Activated naive CD4-positive, alpha-beta T cell treated with anti-CD3 and anti-CD28 coated beads for 36 hours (primary cell): ENCODE measurements at regions of chr16 and their contacts with region 1.

Region 1: GRCh38 chr16:80804056-80804450 is 345 bp downstream of the CDYL2 start:
- DNase-seq: peak; percentile 63
- H3K4me3 Mint-ChIP-seq: peak overlapping the region; percentile 88
- H3K27ac Mint-ChIP-seq: peak overlapping the region; percentile 80
- H3K4me1 Mint-ChIP-seq: peaks cover 31% of the 10 kb centered on the region
- H3K27me3 Mint-ChIP-seq: peaks cover 4% of the 10 kb centered on the region

Region 2: DNA sequence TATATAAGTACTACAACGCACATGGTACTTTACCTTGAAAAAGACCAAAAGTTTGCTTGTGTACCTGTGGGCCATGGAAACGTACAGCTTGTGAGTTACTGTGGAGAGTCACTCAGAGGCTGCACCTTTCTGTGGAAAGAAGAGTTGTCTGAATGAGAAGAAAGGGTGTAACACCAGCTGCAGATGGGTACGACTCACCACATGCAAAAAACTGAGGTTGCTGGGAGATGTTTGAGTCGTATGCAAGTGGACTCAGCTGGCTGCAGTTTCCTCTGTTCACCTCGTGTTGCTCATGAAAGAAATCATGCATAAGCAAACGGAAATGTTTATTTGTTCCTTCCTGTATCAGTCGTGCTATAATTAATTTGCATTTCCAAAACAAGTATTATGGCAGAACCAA is 285.6 kb before region 1 on chr16:
- CTCF ChIA-PET with region 1: no interaction called
- intact Hi-C with region 1: loop called (anchors 1 kb)
- DNase-seq: peak; percentile 71
- H3K4me3 Mint-ChIP-seq: no peak overlapping the region
- H3K27ac Mint-ChIP-seq: no peak overlapping the region
- H3K4me1 Mint-ChIP-seq: peaks cover 21% of the 10 kb centered on the region
- H3K27me3 Mint-ChIP-seq: peaks cover 20% of the 10 kb centered on the region

Region 3: DNA sequence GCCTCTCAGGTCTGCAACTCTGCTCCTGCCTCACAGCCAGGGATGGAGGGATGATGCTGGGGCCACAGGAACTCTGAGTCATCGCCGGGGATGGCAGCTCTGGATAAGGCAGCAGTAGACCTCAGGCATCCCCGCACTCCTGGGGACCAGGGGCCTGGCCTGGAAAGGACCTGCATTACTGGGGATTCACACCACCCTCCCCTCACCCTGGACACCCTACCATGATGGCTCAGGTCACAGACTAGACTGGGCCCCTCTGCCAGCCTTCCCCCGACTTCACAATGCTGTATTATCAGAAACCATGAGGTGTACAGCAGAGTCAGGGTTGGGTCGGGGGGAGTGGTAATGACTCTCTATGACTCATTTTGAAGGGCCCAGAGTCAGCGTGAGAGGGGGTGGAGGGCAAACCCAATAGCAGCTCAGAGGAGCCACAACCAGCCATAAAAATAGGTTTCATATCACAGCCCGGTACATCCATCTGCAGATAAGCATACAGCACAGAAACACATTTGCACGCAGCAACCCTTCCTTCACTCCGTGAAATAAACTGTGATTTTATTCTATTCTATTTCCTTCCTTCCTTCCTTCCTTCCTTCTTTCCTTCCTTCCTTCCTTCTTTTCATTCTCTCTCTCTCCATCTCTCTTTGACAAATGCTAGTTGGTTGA is 234.5 kb before region 1 on chr16:
- CTCF ChIA-PET with region 1: interaction called, 3 read pairs
- intact Hi-C with region 1: loop called (anchors 1 kb)
- DNase-seq: peak; percentile 91
- H3K4me3 Mint-ChIP-seq: no peak overlapping the region
- H3K27ac Mint-ChIP-seq: peak overlapping the region; percentile 43
- H3K4me1 Mint-ChIP-seq: peaks cover 30% of the 10 kb centered on the region
- H3K27me3 Mint-ChIP-seq: no peaks in the 10 kb centered on the region

Region 4: GRCh38 chr16:80671281-80671849 is 132.7 kb before region 1 on chr16:
- CTCF ChIA-PET with region 1: no interaction called
- intact Hi-C with region 1: loop called (anchors 5 kb)
- DNase-seq: no peak
- H3K4me3 Mint-ChIP-seq: no peak overlapping the region
- H3K27ac Mint-ChIP-seq: no peak overlapping the region
- H3K4me1 Mint-ChIP-seq: peaks cover 19% of the 10 kb centered on the region
- H3K27me3 Mint-ChIP-seq: no peaks in the 10 kb centered on the region

Region 5: GRCh38 chr16:80788027-80788426 is 16.0 kb before region 1 on chr16:
- CTCF ChIA-PET with region 1: no interaction called
- intact Hi-C with region 1: no loop called
- DNase-seq: no peak
- H3K4me3 Mint-ChIP-seq: no peak overlapping the region
- H3K27ac Mint-ChIP-seq: no peak overlapping the region
- H3K4me1 Mint-ChIP-seq: no peaks in the 10 kb centered on the region
- H3K27me3 Mint-ChIP-seq: no peaks in the 10 kb centered on the region

Region 6: GRCh38 chr16:80862160-80862705 is 58.2 kb after region 1 on chr16:
- CTCF ChIA-PET with region 1: no interaction called
- intact Hi-C with region 1: no loop called
- DNase-seq: no peak
- H3K4me3 Mint-ChIP-seq: no peak overlapping the region
- H3K27ac Mint-ChIP-seq: no peak overlapping the region
- H3K4me1 Mint-ChIP-seq: no peaks in the 10 kb centered on the region
- H3K27me3 Mint-ChIP-seq: peaks cover 20% of the 10 kb centered on the region

Region 7: DNA sequence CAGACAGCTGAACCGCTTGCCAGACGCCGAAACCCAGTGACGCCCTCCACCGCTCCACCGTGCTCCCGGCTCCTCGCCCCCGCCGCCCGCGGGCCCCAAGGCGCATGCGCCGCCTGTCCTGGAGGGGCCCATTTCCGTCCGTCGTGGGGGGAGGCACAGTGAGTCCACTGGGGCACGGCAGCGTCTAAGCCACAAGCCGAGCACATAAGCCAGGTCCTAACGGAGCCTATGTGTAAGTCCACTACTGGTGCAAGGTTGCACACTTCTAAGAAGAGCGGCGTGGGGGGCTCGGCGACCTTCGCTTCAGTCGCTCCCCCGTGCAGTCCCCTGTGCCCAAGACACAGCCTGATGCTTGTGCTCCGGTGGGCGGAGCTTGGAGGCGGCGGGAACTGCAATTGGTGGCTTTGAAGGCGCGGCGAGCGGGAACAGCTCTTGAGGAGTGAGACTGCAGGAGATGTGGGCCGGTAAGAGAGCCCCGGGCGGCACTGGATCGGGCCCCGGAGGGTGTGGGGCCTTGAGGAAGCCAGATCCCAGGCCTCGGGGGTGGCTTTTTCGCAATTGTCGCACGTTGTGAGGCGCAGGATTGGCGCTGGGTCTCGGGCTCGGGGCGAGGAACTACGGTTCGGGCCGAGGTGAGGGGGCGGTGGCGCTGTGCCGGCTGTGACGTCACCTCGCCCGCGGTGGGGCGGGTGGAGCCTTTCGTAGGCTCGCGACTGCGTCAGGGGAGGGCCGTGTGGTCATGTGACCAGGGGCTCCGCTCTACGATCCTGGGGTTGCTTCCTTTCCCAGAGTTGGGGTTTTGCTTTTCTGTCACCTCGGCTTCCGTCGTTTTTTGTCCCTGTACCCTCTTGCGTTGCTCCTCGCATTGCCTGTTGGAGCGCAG is 203.0 kb after region 1 on chr16 and contains the starts of genes CENPN and CMC2:
- CTCF ChIA-PET with region 1: interaction called, 4 read pairs
- intact Hi-C with region 1: loop called (anchors 1 kb)
- DNase-seq: peak; percentile 98
- H3K4me3 Mint-ChIP-seq: peak within 1 kb of the TSS; percentile 95
- H3K27ac Mint-ChIP-seq: peak within 1 kb of the TSS; percentile 100
- H3K4me1 Mint-ChIP-seq: peaks cover 50% of the 10 kb centered on the region
- H3K27me3 Mint-ChIP-seq: no peaks in the 10 kb centered on the region
- total RNA-seq, gene CENPN: 65.1 to 75.0 TPM
- total RNA-seq, gene CMC2: 112 to 122 TPM

Region 8: GRCh38 chr16:81095953-81096717 is 292.1 kb after region 1 on chr16 and contains the start of gene GCSH:
- CTCF ChIA-PET with region 1: no interaction called
- intact Hi-C with region 1: loop called (anchors 2 kb)
- DNase-seq: peak; percentile 98
- H3K4me3 Mint-ChIP-seq: peak within 1 kb of the TSS; percentile 78
- H3K27ac Mint-ChIP-seq: peak within 1 kb of the TSS; percentile 51
- H3K4me1 Mint-ChIP-seq: peaks cover 17% of the 10 kb centered on the region
- H3K27me3 Mint-ChIP-seq: no peaks in the 10 kb centered on the region
- total RNA-seq, gene GCSH: 25.7 to 27.4 TPM